ENCODE measurements at regions of chr20 and their contacts with region 1.

Region 1: GRCh38 chr20:36064658-36065426 is 89.7 kb upstream of the EPB41L1 start:
- DNase-seq: peak; percentile 94 to 98
- ATAC-seq: peak; percentile 98 to 99 (median 98)
- H3K4me3 ChIP-seq: peak overlapping the region; percentile 42 to 72 (median 62)
- H3K27ac ChIP-seq: peak overlapping the region; percentile 47 to 86 (median 80)
- H3K4me1 ChIP-seq: peaks cover 4 to 24% (median 13%) of the 10 kb centered on the region in 9 donors
- H3K27me3 ChIP-seq: no peaks in the 10 kb centered on the region
- CTCF ChIP-seq: peak in 2 of 9 donors; percentile 5 to 21

Region 2: GRCh38 chr20:36050436-36051317 is 14.2 kb before region 1 on chr20:
- intact Hi-C with region 1: loop called in 2 of 10 experiments (anchors 1 to 2 kb)
- DNase-seq: peak; percentile 91
- ATAC-seq: peak; percentile 99
- H3K4me3 ChIP-seq: peak overlapping the region; percentile 77 to 100 (median 99)
- H3K27ac ChIP-seq: peak overlapping the region; percentile 96 to 100 (median 100)
- H3K4me1 ChIP-seq: peaks cover 4 to 44% (median 35%) of the 10 kb centered on the region in 9 donors
- H3K27me3 ChIP-seq: no peaks in the 10 kb centered on the region
- CTCF ChIP-seq: peak in 1 of 9 donors; percentile 3

Region 3: DNA sequence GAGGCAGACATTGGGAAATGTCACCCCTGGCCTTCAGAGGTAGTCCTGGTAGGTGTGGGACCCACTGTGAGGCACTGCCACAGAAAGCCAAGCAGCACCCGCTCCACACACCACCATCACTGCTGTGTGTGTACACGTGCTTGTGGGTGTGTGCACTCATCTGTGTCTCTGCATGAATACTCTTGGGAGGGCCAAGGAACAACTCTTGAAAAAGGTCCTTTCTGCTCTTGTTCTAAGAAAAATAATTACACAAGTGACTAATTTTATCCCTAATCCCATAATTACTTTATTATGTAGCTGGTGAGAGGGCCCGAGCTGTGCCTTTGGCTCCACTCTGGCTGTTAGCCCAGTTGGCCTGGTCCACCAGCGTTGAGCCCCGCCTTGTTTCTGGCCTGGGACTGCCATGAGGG is 68.0 kb after region 1 on chr20:
- intact Hi-C with region 1: loop called in 1 of 10 experiments (anchors 5 kb)
- DNase-seq: no peak
- ATAC-seq: no peak
- H3K4me3 ChIP-seq: no peak overlapping the region
- H3K27ac ChIP-seq: no peak overlapping the region
- H3K4me1 ChIP-seq: peaks cover 0 to 3% (median 0%) of the 10 kb centered on the region in 9 donors
- H3K27me3 ChIP-seq: no peaks in the 10 kb centered on the region
- CTCF ChIP-seq: no peak

Measured in heart right ventricle (tissue), 16 donors.